Activated naive CD4-positive, alpha-beta T cell treated with anti-CD3 and anti-CD28 coated beads for 36 hours (primary cell): ENCODE measurements at regions of chr18 and their contacts with region 1.

Region 1: DNA sequence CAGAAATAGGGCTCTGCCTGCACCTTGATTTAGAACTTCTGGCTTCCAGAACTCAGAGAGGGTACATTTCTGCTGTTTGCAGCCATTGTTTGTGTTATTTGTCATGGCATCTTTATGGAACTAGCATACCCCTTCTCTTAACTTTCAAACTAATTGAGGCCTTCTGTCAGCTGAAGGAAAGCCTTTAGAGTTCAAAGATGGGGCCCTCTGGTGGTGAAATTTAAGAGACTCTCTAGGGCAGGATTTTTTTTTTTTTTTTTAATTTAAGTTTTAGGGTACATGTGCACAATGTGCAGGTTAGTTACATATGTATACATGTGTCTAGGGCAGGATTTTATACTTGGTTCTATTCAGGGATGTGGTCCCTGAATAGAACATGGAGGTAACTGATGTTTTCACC is 260.6 kb upstream of the LINC00305 start:
- DNase-seq: no peak
- H3K4me3 Mint-ChIP-seq: no peak overlapping the region
- H3K27ac Mint-ChIP-seq: no peak overlapping the region
- H3K4me1 Mint-ChIP-seq: no peaks in the 10 kb centered on the region
- H3K27me3 Mint-ChIP-seq: no peaks in the 10 kb centered on the region

Region 2: DNA sequence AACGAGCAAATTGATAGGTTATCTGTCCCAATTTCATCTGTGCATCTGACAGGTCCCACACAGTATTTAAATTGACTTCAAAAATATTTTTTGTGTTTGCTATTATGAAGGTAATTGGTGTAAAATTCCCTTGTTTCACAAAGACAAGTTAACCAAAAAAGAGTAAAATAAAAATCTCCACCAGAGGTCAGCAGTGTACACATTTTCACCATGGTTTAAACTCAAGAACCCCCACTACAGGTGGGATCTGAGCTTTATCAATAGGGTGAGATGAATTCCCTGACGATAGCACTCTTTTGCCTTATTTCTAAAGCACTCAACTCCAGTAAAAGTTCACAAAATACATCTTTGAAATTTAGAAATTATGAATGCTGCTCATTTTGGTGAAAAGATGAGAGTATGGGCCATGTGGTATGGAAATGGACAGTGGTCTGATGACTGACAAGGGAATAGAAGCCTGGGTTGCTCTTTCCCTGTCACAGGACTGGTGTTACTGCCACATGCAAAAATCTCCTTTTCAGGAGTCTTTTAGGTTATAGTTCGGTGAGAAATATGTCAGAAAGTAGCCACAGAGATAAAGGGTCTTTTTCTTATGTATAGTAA is 371.6 kb before region 1 on chr18:
- CTCF ChIA-PET with region 1: no interaction called
- intact Hi-C with region 1: loop called (anchors 1 kb)
- DNase-seq: no peak
- H3K4me3 Mint-ChIP-seq: no peak overlapping the region
- H3K27ac Mint-ChIP-seq: no peak overlapping the region
- H3K4me1 Mint-ChIP-seq: no peaks in the 10 kb centered on the region
- H3K27me3 Mint-ChIP-seq: peaks cover 10% of the 10 kb centered on the region

Region 3: DNA sequence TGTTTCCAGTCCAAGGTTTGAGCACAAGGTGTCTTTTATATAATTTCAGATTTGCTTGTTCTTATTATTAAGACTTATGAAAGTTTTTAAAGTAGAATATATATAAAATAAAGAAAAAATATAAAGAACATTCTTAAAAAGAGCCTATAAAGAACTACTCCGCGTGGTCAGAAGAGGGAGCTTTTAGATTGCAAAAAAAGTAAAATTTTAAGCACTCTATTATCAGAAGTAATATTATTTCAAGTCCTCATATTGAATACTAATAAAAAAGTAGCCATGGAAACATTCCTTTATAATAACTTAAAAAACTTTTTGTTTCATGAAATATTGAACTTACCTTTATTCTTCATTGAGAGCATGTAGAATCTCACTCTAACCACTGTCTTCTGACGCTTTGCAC is 312.0 kb before region 1 on chr18:
- CTCF ChIA-PET with region 1: no interaction called
- intact Hi-C with region 1: loop called (anchors 10 kb)
- DNase-seq: no peak
- H3K4me3 Mint-ChIP-seq: no peak overlapping the region
- H3K27ac Mint-ChIP-seq: no peak overlapping the region
- H3K4me1 Mint-ChIP-seq: no peaks in the 10 kb centered on the region
- H3K27me3 Mint-ChIP-seq: peaks cover 4% of the 10 kb centered on the region

Region 4: GRCh38 chr18:64191069-64191468 is 218.4 kb before region 1 on chr18:
- CTCF ChIA-PET with region 1: no interaction called
- intact Hi-C with region 1: no loop called
- DNase-seq: no peak
- H3K4me3 Mint-ChIP-seq: no peak overlapping the region
- H3K27ac Mint-ChIP-seq: no peak overlapping the region
- H3K4me1 Mint-ChIP-seq: no peaks in the 10 kb centered on the region
- H3K27me3 Mint-ChIP-seq: no peaks in the 10 kb centered on the region

Region 5: DNA sequence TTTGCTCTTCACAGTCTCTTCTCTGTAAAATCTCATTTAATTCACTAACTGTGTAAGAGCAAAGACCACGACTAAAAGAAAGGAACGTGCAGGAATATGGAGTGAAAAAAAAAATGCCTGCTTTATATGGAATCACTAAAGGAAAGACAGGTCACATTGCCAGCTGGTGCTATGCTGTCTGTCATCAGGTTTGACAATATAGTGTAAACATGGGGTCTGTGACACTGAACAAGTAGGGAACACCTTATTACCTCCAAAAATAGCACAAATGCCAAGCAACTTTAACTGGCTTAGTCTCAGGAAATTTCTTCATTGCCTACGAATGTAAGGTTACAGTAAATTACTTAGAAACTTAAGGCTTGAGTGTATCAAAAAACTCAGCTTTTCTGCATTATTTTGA is 103.9 kb after region 1 on chr18:
- CTCF ChIA-PET with region 1: no interaction called
- intact Hi-C with region 1: no loop called
- DNase-seq: no peak
- H3K4me3 Mint-ChIP-seq: no peak overlapping the region
- H3K27ac Mint-ChIP-seq: no peak overlapping the region
- H3K4me1 Mint-ChIP-seq: no peaks in the 10 kb centered on the region
- H3K27me3 Mint-ChIP-seq: no peaks in the 10 kb centered on the region

Region 6: DNA sequence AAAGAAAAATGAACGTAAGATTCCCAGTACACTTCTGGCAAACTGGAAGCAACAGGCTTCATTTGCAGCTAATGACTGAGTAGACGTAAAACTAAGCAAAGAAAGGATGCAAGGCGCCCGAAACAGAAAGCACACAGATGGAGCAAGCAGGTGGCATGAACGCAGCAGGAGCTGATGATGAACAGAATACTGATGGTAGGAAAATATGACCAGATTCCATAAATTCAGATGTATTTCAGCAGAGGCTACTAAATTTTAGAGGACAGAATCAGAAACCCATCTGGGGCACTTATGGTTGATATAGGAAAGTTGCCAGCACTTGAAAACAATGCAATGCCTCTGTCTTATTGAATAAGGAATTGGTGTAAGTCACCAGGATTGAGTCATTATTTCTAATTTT is 398.0 kb after region 1 on chr18:
- CTCF ChIA-PET with region 1: no interaction called
- intact Hi-C with region 1: no loop called
- DNase-seq: no peak
- H3K4me3 Mint-ChIP-seq: no peak overlapping the region
- H3K27ac Mint-ChIP-seq: no peak overlapping the region
- H3K4me1 Mint-ChIP-seq: no peaks in the 10 kb centered on the region
- H3K27me3 Mint-ChIP-seq: no peaks in the 10 kb centered on the region